Caco-2 (cell line): ENCODE measurements at regions of chr5 and their contacts with region 1.

Region 1: GRCh38 chr5:133754575-133755169 is 142.3 kb upstream of the FSTL4 start:
- DNase-seq: peak; percentile 51 to 54
- H3K4me3 ChIP-seq: no peak overlapping the region
- H3K4me3 Mint-ChIP-seq: no peak overlapping the region
- H3K27ac Mint-ChIP-seq: no peak overlapping the region
- H3K4me1 ChIP-seq: no peaks in the 10 kb centered on the region
- H3K4me1 Mint-ChIP-seq: no peaks in the 10 kb centered on the region
- H3K27me3 ChIP-seq: no peaks in the 10 kb centered on the region; the same call in 1 of the 2 replicates
- H3K27me3 Mint-ChIP-seq: peaks cover 9% of the 10 kb centered on the region
- CTCF ChIP-seq: peak; percentile 39 to 73

Region 2: DNA sequence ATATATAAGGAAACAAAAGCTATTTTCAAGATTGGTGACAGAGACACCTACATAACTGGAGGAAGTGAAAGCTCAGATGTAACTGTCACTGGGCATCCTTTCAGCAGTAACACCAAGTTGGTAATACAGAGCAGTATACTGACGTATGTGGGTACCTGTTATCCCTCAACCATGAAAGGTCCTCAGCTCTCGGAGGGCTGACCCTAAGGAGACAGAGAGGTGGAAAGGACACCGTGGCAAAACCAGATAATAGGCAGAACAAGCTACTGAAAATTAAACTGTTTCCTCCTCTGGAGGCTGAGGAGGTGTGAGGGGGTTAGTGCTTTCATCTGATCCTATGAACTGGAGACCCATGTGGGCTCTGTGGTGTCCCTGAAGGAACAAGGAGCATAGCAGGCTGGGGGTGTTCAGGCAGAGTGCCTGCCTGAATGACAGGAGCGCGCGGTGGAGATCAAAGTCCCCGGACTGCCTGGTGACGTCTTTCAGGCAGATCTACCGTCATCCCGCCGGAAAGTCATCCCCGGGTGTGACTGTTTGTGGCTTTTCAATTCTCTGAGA is 12.2 kb before region 1 on chr5:
- CTCF ChIA-PET with region 1: no interaction called
- POLR2A ChIA-PET with region 1: no interaction called
- intact Hi-C with region 1: loop called (anchors 1 kb)
- DNase-seq: peak; percentile 50 to 51
- H3K4me3 ChIP-seq: no peak overlapping the region
- H3K4me3 Mint-ChIP-seq: peak overlapping the region; percentile 23
- H3K27ac Mint-ChIP-seq: no peak overlapping the region
- H3K4me1 ChIP-seq: peaks cover 7% of the 10 kb centered on the region; the same call in 1 of the 2 replicates
- H3K4me1 Mint-ChIP-seq: peaks cover 8% of the 10 kb centered on the region
- H3K27me3 ChIP-seq: no peaks in the 10 kb centered on the region
- H3K27me3 Mint-ChIP-seq: no peaks in the 10 kb centered on the region
- CTCF ChIP-seq: no peak